ENCODE measurements at regions of chr18 and their contacts with region 1.

Region 1: DNA sequence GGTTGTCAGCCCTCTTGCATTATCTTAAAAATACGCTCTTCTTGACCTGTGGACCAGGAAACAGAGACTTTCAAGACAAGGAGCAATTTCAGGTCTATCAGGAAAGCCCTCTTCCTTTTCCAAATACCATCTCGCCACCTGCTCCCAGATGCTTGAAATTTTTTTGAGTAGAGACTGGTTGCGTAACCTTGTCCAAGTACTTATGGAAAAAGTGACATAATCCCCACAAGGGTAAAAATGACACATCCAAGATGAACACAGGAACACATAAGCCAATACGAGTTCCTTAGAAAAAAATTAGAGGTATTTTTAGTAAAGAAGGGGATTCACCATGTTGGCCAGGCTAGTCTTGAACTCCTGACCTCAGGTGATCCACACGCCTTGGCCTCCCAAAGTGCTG is 1.7 kb downstream of the SERPINB13 start:
- DNase-seq: no peak
- H3K4me3 ChIP-seq: no peak overlapping the region
- H3K27ac ChIP-seq: no peak overlapping the region
- H3K4me1 ChIP-seq: no peaks in the 10 kb centered on the region
- H3K27me3 ChIP-seq: no peaks in the 10 kb centered on the region
- CTCF ChIP-seq: no peak
- POLR2A ChIP-seq: no peak

Region 2: GRCh38 chr18:63523660-63524059 is 65.2 kb before region 1 on chr18:
- intact Hi-C with region 1: loop called (anchors 10 kb)
- DNase-seq: no peak
- H3K4me3 ChIP-seq: no peak overlapping the region
- H3K27ac ChIP-seq: no peak overlapping the region
- H3K4me1 ChIP-seq: no peaks in the 10 kb centered on the region
- H3K27me3 ChIP-seq: no peaks in the 10 kb centered on the region
- CTCF ChIP-seq: no peak
- POLR2A ChIP-seq: no peak

Region 3: DNA sequence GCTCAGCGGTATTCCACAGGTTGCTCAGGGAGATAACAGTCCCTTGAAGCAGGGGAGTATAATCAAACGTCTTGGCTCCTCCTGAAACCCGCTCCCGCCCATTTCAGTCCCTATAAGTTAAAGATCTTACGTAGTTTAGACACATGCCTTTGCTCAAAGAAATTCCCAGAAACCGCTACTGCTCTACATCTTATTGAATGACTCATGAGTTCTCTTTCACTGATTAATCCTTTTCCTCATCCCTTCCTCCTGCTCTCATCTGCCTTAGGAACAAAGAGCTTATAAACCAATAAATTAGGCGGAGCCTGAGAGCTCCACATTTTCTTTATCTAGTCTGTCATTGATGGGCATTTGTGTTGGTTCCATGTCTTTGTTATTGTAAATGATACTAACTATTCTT is 59.4 kb after region 1 on chr18:
- intact Hi-C with region 1: no loop called
- DNase-seq: no peak
- H3K4me3 ChIP-seq: no peak overlapping the region
- H3K27ac ChIP-seq: no peak overlapping the region
- H3K4me1 ChIP-seq: no peaks in the 10 kb centered on the region
- H3K27me3 ChIP-seq: no peaks in the 10 kb centered on the region
- CTCF ChIP-seq: no peak
- POLR2A ChIP-seq: no peak